ENCODE measurements at regions of chr13 and their contacts with region 1.

Region 1: GRCh38 chr13:95676762-95677563 is at the start of gene DNAJC3:
- DNase-seq: peak; percentile 99
- H3K4me3 ChIP-seq: peak within 1 kb of the TSS; percentile 57 to 89 (median 71)
- H3K27ac ChIP-seq: peak within 1 kb of the TSS; percentile 68
- H3K4me1 ChIP-seq: peaks cover 23% of the 10 kb centered on the region
- H3K27me3 ChIP-seq: no peaks in the 10 kb centered on the region
- CTCF ChIP-seq: no peak
- POLR2A ChIP-seq: peak; percentile 73
- total RNA-seq, gene DNAJC3: 48.6 and 51.2 TPM in 2 replicates

Region 2: DNA sequence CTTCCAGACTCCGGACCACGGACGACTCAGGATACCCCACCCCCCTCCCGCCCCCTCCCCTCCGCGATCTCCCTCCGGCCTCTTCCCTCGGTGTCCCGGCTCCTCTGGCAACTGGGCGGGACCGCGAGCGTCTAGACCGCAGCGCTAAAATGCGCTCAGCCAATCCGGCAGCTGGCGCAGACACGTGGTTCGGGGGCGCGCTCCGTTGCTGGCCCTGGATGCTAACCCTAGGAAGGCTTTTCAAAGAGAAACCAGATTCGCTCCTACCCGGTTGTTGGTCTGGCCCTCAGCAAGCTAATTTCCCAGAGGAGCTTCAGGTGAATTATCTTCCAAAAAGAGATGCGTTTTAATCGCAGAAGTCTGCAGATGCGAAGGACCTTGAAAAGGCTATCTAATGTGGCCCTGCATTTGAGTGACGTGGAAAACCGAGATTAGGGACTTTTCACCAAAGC is 32.3 kb before region 1 on chr13 and contains the start of gene DZIP1:
- CTCF ChIA-PET with region 1: no interaction called
- POLR2A ChIA-PET with region 1: interaction called, 7 read pairs
- dilution Hi-C with region 1: no loop called
- intact Hi-C with region 1: loop called (anchors 1 kb)
- DNase-seq: peak; percentile 84
- H3K4me3 ChIP-seq: peak within 1 kb of the TSS; percentile 78 to 93 (median 86)
- H3K27ac ChIP-seq: peak within 1 kb of the TSS; percentile 39
- H3K4me1 ChIP-seq: peaks cover 29% of the 10 kb centered on the region
- H3K27me3 ChIP-seq: no peaks in the 10 kb centered on the region
- CTCF ChIP-seq: no peak
- POLR2A ChIP-seq: no peak
- total RNA-seq, gene DZIP1: 32.1 and 33.9 TPM in 2 replicates

Region 3: DNA sequence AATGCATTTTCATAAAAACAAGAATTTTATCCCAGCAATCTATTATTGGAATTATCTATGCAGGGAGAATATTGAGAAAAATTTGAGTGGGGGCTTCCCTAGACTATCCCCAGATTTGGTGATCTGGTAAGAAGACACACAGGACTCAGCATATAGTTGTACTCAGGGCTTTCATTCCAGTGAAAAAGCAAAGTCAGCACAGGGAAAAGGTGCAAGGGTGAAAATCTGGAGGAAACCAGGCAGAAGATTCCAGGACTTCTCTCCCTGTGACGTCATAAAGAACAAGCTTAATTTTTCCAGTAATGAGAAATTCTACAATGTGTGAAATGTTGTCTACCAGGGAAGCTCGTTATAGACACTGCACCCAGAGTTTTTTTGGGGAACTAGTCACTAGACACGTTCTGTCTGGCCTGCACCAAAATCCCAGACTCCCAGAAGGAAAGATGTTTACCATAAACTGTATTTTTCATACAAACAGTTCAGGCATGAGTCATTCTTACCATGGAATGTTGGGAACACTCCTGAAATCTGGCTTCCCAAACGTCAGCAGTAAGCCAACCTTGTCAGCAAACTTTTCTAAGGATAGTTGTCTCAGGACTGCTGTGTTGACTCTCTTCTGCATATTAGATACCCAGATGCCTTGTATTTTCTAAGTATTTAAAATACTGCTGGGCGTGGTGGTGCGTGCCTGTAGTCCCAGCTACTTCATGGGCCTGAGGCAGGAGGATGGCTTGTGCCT is 107.4 kb after region 1 on chr13:
- CTCF ChIA-PET with region 1: interaction called, 3 read pairs
- POLR2A ChIA-PET with region 1: no interaction called
- dilution Hi-C with region 1: no loop called
- intact Hi-C with region 1: loop called (anchors 2 kb)
- DNase-seq: peak; percentile 93
- H3K4me3 ChIP-seq: no peak overlapping the region
- H3K27ac ChIP-seq: peak overlapping the region; percentile 69
- H3K4me1 ChIP-seq: peaks cover 17% of the 10 kb centered on the region
- H3K27me3 ChIP-seq: no peaks in the 10 kb centered on the region
- CTCF ChIP-seq: no peak
- POLR2A ChIP-seq: no peak

Measured in endothelial cell of umbilical vein (primary cell).